ENCODE measurements at regions of chr20 and their contacts with region 1.

Region 1: GRCh38 chr20:36861875-36862801 is 13.8 kb upstream of the TLDC2 start:
- DNase-seq: peak; percentile 91
- H3K4me3 ChIP-seq: peak overlapping the region; percentile 82 to 84
- H3K27ac ChIP-seq: peak overlapping the region; percentile 82 to 83
- H3K4me1 ChIP-seq: peaks cover 22 to 29% of the 10 kb centered on the region in 2 experiments
- H3K27me3 ChIP-seq: no peaks in the 10 kb centered on the region
- CTCF ChIP-seq: no peak
- EP300 ChIP-seq: no peak; a peak in 1 of 4 replicates
- RAD21 ChIP-seq: no peak

Region 2: DNA sequence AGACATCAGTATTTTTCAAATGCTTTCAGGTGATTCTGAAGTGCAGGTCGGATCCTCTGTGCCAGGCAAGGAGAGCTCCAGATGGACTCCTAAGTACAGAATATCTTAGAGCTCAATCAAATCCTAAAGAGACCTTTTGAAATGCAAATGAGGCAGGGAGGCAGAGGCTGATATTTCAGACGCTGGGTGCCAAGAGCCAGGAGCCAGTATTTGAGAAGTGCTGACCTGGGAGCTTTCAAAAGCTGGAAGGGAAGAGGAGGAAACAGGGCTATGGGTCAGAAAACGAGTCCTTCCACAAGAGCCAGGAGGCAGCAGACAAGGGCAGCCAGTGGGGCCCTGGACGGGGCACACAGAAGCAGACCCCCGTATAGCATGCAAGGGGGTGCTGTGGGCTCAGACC is 42.5 kb before region 1 on chr20:
- CTCF ChIA-PET with region 1: interaction called, 10 read pairs
- POLR2A ChIA-PET with region 1: no interaction called
- DNase-seq: no peak
- H3K4me3 ChIP-seq: no peak overlapping the region
- H3K27ac ChIP-seq: no peak overlapping the region
- H3K4me1 ChIP-seq: peaks cover 0 to 3% of the 10 kb centered on the region in 2 experiments; a peak in 2 of 4 replicates
- H3K27me3 ChIP-seq: no peaks in the 10 kb centered on the region
- CTCF ChIP-seq: no peak
- EP300 ChIP-seq: no peak
- RAD21 ChIP-seq: no peak

Region 3: GRCh38 chr20:36835453-36836198 is 26.5 kb before region 1 on chr20:
- CTCF ChIA-PET with region 1: interaction called, 28 read pairs
- POLR2A ChIA-PET with region 1: interaction called, 5 read pairs
- DNase-seq: peak; percentile 99
- H3K4me3 ChIP-seq: peak overlapping the region; percentile 15 to 29; a peak in 3 of 4 replicates
- H3K27ac ChIP-seq: peak overlapping the region; percentile 66 to 81
- H3K4me1 ChIP-seq: peaks cover 7 to 23% of the 10 kb centered on the region in 2 experiments; a peak in 3 of 4 replicates
- H3K27me3 ChIP-seq: no peaks in the 10 kb centered on the region
- CTCF ChIP-seq: no peak
- EP300 ChIP-seq: peak; percentile 7 to 53; a peak in 1 of 4 replicates
- RAD21 ChIP-seq: peak; percentile 5; the same call in 1 of the 2 replicates

Region 4: DNA sequence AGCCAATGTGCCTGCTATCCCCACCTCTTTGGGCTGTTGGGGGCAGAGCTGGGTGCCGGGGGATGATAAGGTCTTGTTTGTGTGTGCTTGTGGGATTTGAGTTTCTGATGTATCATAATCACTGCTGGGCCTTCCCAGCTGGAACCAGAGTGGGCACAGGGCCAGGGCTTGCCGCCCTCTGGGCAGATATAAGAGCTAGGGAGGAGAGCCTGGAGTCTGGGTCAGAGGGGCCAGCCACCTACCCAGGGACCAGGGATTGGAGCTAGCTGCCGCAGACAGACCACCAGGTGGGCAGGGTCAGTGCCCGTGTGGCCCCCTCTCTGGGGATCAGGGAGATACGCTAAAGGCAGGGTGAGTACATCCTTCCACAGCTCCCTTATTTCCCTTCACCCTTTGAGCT is 10.7 kb after region 1 on chr20:
- CTCF ChIA-PET with region 1: interaction called, 38 read pairs
- POLR2A ChIA-PET with region 1: interaction called, 3 read pairs
- DNase-seq: peak; percentile 84
- H3K4me3 ChIP-seq: no peak overlapping the region
- H3K27ac ChIP-seq: no peak overlapping the region; a peak in 1 of 4 replicates
- H3K4me1 ChIP-seq: peaks cover 0 to 8% of the 10 kb centered on the region in 2 experiments; a peak in 1 of 4 replicates
- H3K27me3 ChIP-seq: no peaks in the 10 kb centered on the region
- CTCF ChIP-seq: no peak
- EP300 ChIP-seq: no peak
- RAD21 ChIP-seq: no peak

Region 5: DNA sequence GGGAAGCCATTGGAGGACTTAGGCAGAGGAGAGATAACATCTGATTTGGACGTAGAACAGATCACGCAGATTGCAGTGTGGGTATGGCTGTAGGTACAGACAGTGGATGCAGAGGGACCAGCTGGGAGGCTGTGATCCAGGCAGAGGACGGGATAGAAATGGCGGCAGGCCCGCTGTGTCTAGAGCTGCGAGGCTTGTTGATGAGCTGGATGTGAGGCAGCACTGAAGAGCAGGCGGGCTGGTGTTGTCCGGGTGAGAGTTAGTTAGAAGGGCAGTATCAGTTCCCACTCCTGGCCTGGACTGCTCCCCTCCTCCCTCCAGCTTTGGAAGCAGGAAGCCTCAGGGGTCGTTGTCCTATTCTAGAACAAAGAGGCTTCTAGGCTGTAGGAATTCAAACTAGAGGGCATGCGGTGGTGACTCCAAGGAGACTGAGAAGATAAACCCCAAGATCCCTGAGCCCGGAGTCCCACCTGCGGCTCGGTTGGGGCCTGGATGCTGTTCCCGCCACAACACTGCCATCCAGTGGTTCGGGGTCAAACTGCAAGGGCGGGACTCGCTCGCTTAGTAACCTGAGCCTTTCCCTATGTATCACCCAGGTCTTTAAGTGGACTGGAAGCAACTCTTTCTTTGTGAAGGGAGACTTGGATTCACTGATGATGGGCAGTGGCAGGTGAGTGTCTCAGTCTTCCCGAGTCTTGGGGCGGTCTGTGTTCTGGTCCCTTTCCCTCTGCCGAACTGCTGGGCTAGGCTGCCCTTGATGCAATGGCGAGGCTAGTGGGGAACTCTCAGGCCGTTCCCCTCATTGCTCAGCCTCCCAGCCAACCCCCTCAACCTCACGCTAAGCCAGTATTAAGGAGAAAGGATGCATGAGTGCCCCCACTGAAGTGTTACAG is 25.0 kb after region 1 on chr20:
- CTCF ChIA-PET with region 1: interaction called, 12 read pairs
- POLR2A ChIA-PET with region 1: no interaction called
- DNase-seq: peak; percentile 87
- H3K4me3 ChIP-seq: no peak overlapping the region; a peak in 1 of 4 replicates
- H3K27ac ChIP-seq: no peak overlapping the region
- H3K4me1 ChIP-seq: peaks cover 0 to 7% of the 10 kb centered on the region in 2 experiments; a peak in 2 of 4 replicates
- H3K27me3 ChIP-seq: no peaks in the 10 kb centered on the region
- CTCF ChIP-seq: peak; percentile 91
- EP300 ChIP-seq: no peak
- RAD21 ChIP-seq: peak; percentile 96

Region 6: GRCh38 chr20:36932476-36933426 is 70.6 kb after region 1 on chr20:
- CTCF ChIA-PET with region 1: no interaction called
- POLR2A ChIA-PET with region 1: no interaction called
- DNase-seq: no peak
- H3K4me3 ChIP-seq: no peak overlapping the region
- H3K27ac ChIP-seq: no peak overlapping the region
- H3K4me1 ChIP-seq: no peaks in the 10 kb centered on the region
- H3K27me3 ChIP-seq: no peaks in the 10 kb centered on the region
- CTCF ChIP-seq: no peak
- EP300 ChIP-seq: no peak
- RAD21 ChIP-seq: no peak

Region 7: DNA sequence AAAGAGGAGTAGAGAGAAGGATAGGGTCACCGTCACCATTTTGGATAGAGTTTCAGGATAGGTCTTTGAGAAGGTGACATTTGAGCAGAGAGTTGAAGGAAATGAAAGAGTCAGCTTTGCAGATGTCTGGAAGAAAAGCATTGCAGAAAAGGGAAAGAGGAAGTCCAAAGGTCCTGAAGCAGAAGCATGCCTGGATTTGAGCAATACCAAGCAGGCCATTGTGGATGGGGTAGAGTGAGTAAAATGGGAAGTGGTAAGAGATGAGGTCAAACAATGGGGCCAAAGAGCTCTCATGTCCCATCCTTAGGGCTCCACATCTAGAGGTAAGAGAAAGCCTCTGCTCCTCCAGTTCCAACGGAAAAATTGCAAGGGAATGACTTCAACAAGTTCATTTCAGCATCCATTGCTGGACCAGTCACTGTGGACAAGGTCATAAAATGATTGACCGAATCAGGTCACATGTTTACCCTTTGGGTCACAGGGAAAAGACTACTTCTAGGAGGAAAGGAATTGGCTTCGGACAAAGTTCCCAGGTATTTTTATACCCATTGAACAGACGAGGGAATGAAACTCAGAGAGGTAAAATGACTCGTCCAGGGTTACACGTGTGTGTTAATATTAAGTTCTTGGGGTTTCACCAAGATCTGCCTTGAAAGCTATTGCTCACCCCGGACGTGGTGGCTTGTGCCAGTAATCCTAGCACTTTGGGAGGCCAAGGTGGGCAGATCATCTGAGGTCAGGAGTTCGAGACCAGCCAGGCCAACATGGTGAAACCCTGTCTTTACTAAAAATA is 95.9 kb after region 1 on chr20:
- CTCF ChIA-PET with region 1: no interaction called
- POLR2A ChIA-PET with region 1: no interaction called
- DNase-seq: no peak
- H3K4me3 ChIP-seq: no peak overlapping the region
- H3K27ac ChIP-seq: no peak overlapping the region
- H3K4me1 ChIP-seq: no peaks in the 10 kb centered on the region
- H3K27me3 ChIP-seq: no peaks in the 10 kb centered on the region
- CTCF ChIP-seq: no peak
- EP300 ChIP-seq: no peak
- RAD21 ChIP-seq: no peak

Measured in SK-N-SH (cell line).